ENCODE measurements at regions of chr1 and their contacts with region 1.

Region 1: GRCh38 chr1:65292861-65293593 is 16.3 kb upstream of the DNAJC6 start:
- DNase-seq: peak; percentile 68 to 98 (median 80)
- ATAC-seq: peak; percentile 95
- H3K4me3 ChIP-seq: no peak overlapping the region
- H3K27ac ChIP-seq: peak overlapping the region; percentile 96
- H3K4me1 ChIP-seq: peaks cover 28 to 52% of the 10 kb centered on the region in 2 experiments
- H3K27me3 ChIP-seq: no peaks in the 10 kb centered on the region
- CTCF ChIP-seq: no peak
- EP300 ChIP-seq: peak; percentile 100
- POLR2A ChIP-seq: peak; percentile 61; the same call in 1 of the 2 replicates
- RAD21 ChIP-seq: peak in 1 of 2 experiments; percentile 43; a peak in 3 of 4 replicates

Region 2: DNA sequence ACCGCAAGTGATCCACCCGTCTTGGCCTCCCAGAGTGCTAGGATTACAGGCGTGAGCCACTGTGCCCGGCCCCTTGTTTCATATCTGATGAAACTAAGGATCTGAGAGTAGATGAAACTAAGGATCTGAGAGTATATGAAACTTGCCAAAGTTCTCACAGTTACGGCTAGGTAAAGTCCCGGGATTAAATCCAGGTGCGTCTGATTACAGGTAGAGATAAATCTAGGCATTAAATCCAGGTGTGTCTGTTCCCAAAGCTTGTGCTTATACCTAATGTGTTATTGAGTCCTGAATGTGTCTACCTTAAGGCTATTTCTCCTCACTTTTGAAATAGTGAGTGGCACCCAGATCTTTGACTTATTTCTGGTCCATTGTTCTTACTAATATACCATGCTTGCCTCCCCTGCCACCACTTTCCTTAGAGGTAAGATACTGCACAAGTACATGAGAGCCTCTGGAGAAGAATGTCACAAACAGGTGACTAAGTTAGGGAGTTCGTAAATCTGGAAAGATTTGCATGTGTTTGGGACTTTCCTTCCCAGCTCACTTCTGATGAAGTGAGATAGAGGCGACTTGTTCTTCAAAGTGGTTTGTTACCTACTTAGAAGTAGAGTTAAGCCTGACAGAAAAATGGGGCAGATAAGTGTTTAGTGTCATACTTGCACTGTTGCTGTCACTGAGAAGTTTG is 78.5 kb before region 1 on chr1:
- CTCF ChIA-PET with region 1: no interaction called
- POLR2A ChIA-PET with region 1: no interaction called
- in situ Hi-C with region 1: no loop called
- intact Hi-C with region 1: loop called (anchors 1 kb)
- DNase-seq: no peak
- ATAC-seq: no peak; the same call in 1 of the 3 replicates
- H3K4me3 ChIP-seq: no peak overlapping the region
- H3K27ac ChIP-seq: no peak overlapping the region
- H3K4me1 ChIP-seq: peaks cover 5 to 19% of the 10 kb centered on the region in 2 experiments; a peak in 3 of 5 replicates
- H3K27me3 ChIP-seq: no peaks in the 10 kb centered on the region
- CTCF ChIP-seq: no peak
- EP300 ChIP-seq: no peak
- POLR2A ChIP-seq: no peak
- RAD21 ChIP-seq: no peak

Region 3: GRCh38 chr1:65254319-65255034 is 38.5 kb before region 1 on chr1:
- CTCF ChIA-PET with region 1: no interaction called
- POLR2A ChIA-PET with region 1: interaction called, 9 read pairs
- in situ Hi-C with region 1: no loop called
- intact Hi-C with region 1: loop called (anchors 1 kb)
- DNase-seq: peak; percentile 93 to 96 (median 94)
- ATAC-seq: peak; percentile 90
- H3K4me3 ChIP-seq: peak overlapping the region; percentile 68
- H3K27ac ChIP-seq: peak overlapping the region; percentile 83
- H3K4me1 ChIP-seq: peaks cover 19 to 23% of the 10 kb centered on the region in 2 experiments
- H3K27me3 ChIP-seq: no peaks in the 10 kb centered on the region
- CTCF ChIP-seq: peak in 2 of 3 experiments; percentile 18 to 29; a peak in 3 of 6 replicates
- EP300 ChIP-seq: no peak; the same call in 1 of the 2 replicates
- POLR2A ChIP-seq: no peak; the same call in 1 of the 2 replicates
- RAD21 ChIP-seq: peak; percentile 37 to 51; a peak in 2 of 4 replicates

Region 4: DNA sequence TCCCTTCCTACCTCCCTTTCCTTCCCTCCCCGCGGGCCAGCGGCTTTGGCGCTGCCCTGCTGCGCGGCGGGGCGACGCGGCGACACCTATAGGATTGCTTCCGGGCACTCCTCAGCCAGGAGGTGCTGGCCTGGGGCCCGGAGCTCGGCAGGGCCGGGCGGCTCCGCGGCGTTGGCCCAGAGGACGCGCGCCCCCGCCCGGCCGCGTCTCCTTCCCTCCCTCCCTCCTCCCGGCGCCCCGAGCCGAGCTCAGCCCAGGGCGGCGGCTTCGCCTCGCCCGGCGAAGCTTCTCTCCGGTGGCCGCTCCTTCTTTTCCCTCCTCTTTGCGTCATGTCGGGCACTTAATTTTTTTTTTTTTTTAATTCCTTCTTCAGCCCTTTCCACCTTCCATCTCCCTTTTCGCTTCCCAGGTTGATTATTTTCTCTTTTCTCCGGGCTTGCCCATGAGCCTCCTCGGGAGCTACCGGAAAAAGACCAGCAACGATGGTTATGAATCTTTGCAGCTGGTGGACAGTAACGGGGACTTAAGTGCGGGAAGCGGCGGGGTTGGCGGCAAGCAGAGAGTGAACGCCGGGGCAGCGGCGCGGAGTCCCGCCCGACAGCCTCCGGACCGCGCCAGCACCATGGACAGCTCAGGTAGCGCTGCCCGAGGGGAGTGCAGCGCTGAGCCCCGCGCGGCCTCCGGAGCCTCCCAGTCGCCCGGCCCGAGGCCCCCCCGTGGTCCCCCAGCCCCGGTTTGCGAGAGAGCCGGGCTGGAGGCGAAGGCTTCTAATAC is 16.5 kb after region 1 on chr1 and contains the start of gene DNAJC6:
- CTCF ChIA-PET with region 1: no interaction called
- POLR2A ChIA-PET with region 1: interaction called, 13 read pairs
- in situ Hi-C with region 1: no loop called
- intact Hi-C with region 1: loop called (anchors 1 kb)
- DNase-seq: peak; percentile 76 to 88 (median 80)
- ATAC-seq: peak; percentile 93
- H3K4me3 ChIP-seq: peak within 1 kb of the TSS; percentile 51
- H3K27ac ChIP-seq: peak within 1 kb of the TSS; percentile 68
- H3K4me1 ChIP-seq: peaks cover 16 to 25% of the 10 kb centered on the region in 2 experiments; a peak in 4 of 5 replicates
- H3K27me3 ChIP-seq: no peaks in the 10 kb centered on the region
- CTCF ChIP-seq: peak in 2 of 3 experiments; percentile 37 to 58; a peak in 4 of 6 replicates
- EP300 ChIP-seq: no peak; the same call in 1 of the 2 replicates
- POLR2A ChIP-seq: 0 out of 2 replicates have a peak, but pooled peaks have one; percentile 13
- RAD21 ChIP-seq: peak in 1 of 2 experiments; percentile 37; a peak in 3 of 4 replicates
- polyA plus RNA-seq, gene DNAJC6: 6.7 to 8.2 TPM

Region 5: GRCh38 chr1:65419681-65420589 is 126.9 kb after region 1 on chr1:
- CTCF ChIA-PET with region 1: no interaction called
- POLR2A ChIA-PET with region 1: no interaction called
- in situ Hi-C with region 1: no loop called
- intact Hi-C with region 1: loop called (anchors 5 kb)
- DNase-seq: peak; percentile 96 to 98 (median 96)
- ATAC-seq: peak; percentile 91
- H3K4me3 ChIP-seq: peak overlapping the region; percentile 83
- H3K27ac ChIP-seq: peak overlapping the region; percentile 85
- H3K4me1 ChIP-seq: peaks cover 25 to 61% of the 10 kb centered on the region in 2 experiments
- H3K27me3 ChIP-seq: no peaks in the 10 kb centered on the region
- CTCF ChIP-seq: no peak
- EP300 ChIP-seq: no peak
- POLR2A ChIP-seq: peak; percentile 66
- RAD21 ChIP-seq: no peak

Measured in K562 (cell line).